ENCODE measurements at regions of chr12 and their contacts with region 1.

Region 1: GRCh38 chr12:96303653-96304052 is 96.6 kb downstream of the CDK17 start:
- DNase-seq: no peak
- H3K4me3 ChIP-seq: no peak overlapping the region
- H3K27ac ChIP-seq: no peak overlapping the region
- H3K4me1 ChIP-seq: no peaks in the 10 kb centered on the region
- H3K27me3 ChIP-seq: no peaks in the 10 kb centered on the region
- CTCF ChIP-seq: no peak

Region 2: DNA sequence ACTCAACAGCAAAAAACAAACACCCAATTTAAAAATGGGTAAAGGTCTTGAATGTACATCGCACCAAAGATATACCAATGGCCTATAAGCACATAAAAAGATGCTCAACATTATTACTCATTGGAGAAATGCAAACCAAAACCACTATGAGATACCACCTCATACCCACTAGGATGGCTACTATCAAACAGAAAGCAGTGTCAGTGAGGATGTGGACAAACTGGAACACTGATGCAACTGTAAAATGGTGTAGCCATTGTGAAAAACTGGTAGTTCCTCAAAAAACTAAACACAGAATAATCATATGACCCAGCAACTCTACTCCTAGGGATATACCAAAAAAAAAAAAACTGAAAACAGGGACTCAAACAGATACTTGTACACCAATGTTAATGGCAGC is 47.3 kb after region 1 on chr12:
- CTCF ChIA-PET with region 1: no interaction called
- dilution Hi-C with region 1: no loop called
- in situ Hi-C with region 1: no loop called
- intact Hi-C with region 1: no loop called
- DNase-seq: peak; percentile 25
- H3K4me3 ChIP-seq: no peak overlapping the region
- H3K27ac ChIP-seq: no peak overlapping the region
- H3K4me1 ChIP-seq: peaks cover 8% of the 10 kb centered on the region
- H3K27me3 ChIP-seq: no peaks in the 10 kb centered on the region
- CTCF ChIP-seq: no peak

Region 3: GRCh38 chr12:96501139-96501761 is 197.6 kb after region 1 on chr12:
- CTCF ChIA-PET with region 1: no interaction called
- dilution Hi-C with region 1: no loop called
- in situ Hi-C with region 1: no loop called
- intact Hi-C with region 1: loop called (anchors 5 kb)
- DNase-seq: peak; percentile 88
- H3K4me3 ChIP-seq: no peak overlapping the region
- H3K27ac ChIP-seq: peak overlapping the region; percentile 93
- H3K4me1 ChIP-seq: peaks cover 31% of the 10 kb centered on the region
- H3K27me3 ChIP-seq: no peaks in the 10 kb centered on the region
- CTCF ChIP-seq: no peak

Measured in mammary epithelial cell (primary cell).